ENCODE measurements at regions of chr12 and their contacts with region 1.

Region 1: DNA sequence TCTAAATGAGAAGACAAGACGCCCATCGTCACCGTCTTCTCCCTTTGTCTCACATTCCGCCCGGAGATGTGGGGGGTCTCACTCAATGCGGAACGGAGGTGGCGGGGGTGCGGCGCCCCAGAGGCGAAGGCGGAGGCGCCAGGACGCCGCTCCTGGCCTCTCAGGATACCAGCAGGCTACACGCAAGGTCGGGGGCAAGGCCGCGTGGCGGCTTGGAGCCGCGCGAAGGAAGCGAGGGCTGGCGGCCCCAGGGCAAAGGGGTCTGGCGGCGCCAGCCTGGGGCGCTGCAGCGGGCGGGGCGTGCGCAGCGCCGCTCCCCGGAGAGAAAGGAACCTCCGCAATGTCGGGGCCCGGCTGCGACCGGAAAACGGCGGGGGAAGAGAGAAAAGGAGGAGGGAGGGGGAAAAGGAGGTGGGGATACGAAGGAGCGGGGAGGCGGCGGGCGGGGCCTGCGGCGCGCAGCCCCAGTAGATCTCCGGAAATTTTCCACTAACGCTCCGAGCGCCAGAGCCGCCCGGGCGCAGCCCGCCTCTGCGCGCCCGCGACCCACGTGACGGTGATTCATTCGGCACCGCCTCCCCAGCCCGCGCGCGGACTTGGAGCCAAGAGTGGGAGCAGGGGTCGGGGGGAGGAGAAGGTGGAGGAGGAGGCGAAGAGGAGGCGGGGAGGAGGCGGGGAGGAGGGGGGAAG is 10.5 kb upstream of the SLC38A2 start:
- DNase-seq: peak; percentile 96
- H3K4me3 Mint-ChIP-seq: peak overlapping the region; percentile 80
- H3K27ac Mint-ChIP-seq: peak overlapping the region; percentile 92
- H3K4me1 Mint-ChIP-seq: peaks cover 27% of the 10 kb centered on the region
- H3K27me3 Mint-ChIP-seq: no peaks in the 10 kb centered on the region

Region 2: GRCh38 chr12:45215419-45216229 is 1167.5 kb before region 1 on chr12 and contains the start of gene ANO6:
- CTCF ChIA-PET with region 1: no interaction called
- POLR2A ChIA-PET with region 1: no interaction called
- intact Hi-C with region 1: loop called (anchors 5 kb)
- DNase-seq: peak; percentile 88
- H3K4me3 Mint-ChIP-seq: peak within 1 kb of the TSS; percentile 90
- H3K27ac Mint-ChIP-seq: peak within 1 kb of the TSS; percentile 94
- H3K4me1 Mint-ChIP-seq: peaks cover 48% of the 10 kb centered on the region
- H3K27me3 Mint-ChIP-seq: no peaks in the 10 kb centered on the region
- total RNA-seq, gene ANO6: 19.0 to 21.4 TPM

Region 3: GRCh38 chr12:46360908-46361666 is 22.0 kb before region 1 on chr12:
- CTCF ChIA-PET with region 1: no interaction called
- POLR2A ChIA-PET with region 1: no interaction called
- intact Hi-C with region 1: no loop called
- DNase-seq: no peak
- H3K4me3 Mint-ChIP-seq: no peak overlapping the region
- H3K27ac Mint-ChIP-seq: peak overlapping the region; percentile 71
- H3K4me1 Mint-ChIP-seq: peaks cover 51% of the 10 kb centered on the region
- H3K27me3 Mint-ChIP-seq: no peaks in the 10 kb centered on the region

Region 4: GRCh38 chr12:46430340-46430948 is 47.3 kb after region 1 on chr12:
- CTCF ChIA-PET with region 1: no interaction called
- POLR2A ChIA-PET with region 1: no interaction called
- intact Hi-C with region 1: loop called (anchors 2 kb)
- DNase-seq: no peak
- H3K4me3 Mint-ChIP-seq: peak overlapping the region; percentile 6
- H3K27ac Mint-ChIP-seq: peak overlapping the region; percentile 74
- H3K4me1 Mint-ChIP-seq: peaks cover 15% of the 10 kb centered on the region
- H3K27me3 Mint-ChIP-seq: no peaks in the 10 kb centered on the region

Region 5: DNA sequence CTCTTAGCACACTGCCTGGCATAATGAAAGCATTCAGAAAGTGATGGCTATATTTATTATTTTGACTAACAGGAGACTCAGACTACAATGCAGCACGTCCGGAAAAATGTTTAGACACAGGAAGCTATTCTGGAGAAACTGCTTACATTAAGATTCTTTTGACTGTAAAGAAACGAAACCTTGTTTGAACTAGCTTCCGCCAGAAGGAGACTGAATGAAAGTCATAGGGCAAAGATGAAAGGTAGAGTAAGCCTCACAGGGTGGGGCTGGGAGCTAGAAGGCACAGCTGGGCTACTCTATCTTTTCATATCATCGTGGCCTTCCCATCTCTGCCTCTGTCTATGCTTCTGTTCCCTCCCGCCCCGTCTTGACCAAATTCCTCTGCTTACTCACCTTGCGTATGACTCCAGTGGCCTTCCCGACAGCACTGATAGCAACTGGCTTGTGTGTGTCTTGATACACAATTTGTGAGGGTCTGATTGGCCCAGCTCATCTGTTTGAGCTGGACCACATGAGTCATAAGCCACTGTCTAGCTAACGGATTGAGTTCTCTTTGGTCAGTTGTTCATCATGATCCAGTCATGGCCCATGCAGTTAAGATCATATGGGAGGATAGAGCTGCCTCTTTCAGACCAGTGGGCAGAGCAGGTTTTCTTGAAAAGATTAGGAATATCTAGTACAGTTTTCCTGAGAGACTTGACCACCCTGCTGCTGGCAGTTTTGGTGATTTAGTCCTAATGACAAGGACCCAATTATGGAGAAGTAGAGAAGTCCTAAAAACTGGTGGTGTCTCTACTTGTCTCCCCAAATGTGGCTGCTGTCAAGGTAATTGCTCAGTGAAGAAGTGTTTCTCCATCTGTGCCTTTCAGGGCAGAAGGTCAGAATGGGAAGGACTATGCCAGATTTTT is 141.0 kb after region 1 on chr12:
- CTCF ChIA-PET with region 1: no interaction called
- POLR2A ChIA-PET with region 1: interaction called, 3 read pairs
- intact Hi-C with region 1: loop called (anchors 1 kb)
- DNase-seq: peak; percentile 74
- H3K4me3 Mint-ChIP-seq: peak overlapping the region; percentile 65
- H3K27ac Mint-ChIP-seq: peak overlapping the region; percentile 90
- H3K4me1 Mint-ChIP-seq: peaks cover 30% of the 10 kb centered on the region
- H3K27me3 Mint-ChIP-seq: no peaks in the 10 kb centered on the region